MCF 10A (cell line): ENCODE measurements at regions of chr11 and their contacts with region 1.

Region 1: DNA sequence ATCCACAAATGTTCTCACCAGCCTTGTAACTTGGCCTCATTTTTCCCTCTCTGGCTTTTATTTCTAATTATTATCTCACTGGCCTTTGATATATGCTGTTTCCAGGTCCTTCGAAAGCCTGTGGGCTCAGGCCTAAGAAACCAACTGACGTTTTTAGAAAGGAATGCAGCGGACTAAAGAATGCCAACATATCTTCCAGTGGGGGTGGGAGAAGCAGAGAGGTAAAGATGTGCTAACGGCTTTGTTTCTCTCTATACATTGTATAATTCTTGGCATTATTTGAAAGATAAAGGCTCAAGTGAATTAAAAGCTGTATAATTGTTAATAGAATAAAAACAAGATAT is 28.2 kb downstream of the OR6Q1 start:
- DNase-seq: peak; percentile 64
- H3K4me3 Mint-ChIP-seq: no peak overlapping the region
- H3K27ac Mint-ChIP-seq: peak overlapping the region; percentile 46
- H3K4me1 Mint-ChIP-seq: peaks cover 16% of the 10 kb centered on the region
- H3K27me3 Mint-ChIP-seq: no peaks in the 10 kb centered on the region
- CTCF ChIP-seq: no peak

Region 2: GRCh38 chr11:57823859-57824258 is 235.1 kb before region 1 on chr11:
- CTCF ChIA-PET with region 1: interaction called, 3 read pairs
- POLR2A ChIA-PET with region 1: interaction called, 3 read pairs
- intact Hi-C with region 1: loop called (anchors 10 kb)
- DNase-seq: no peak
- H3K4me3 Mint-ChIP-seq: no peak overlapping the region
- H3K27ac Mint-ChIP-seq: no peak overlapping the region
- H3K4me1 Mint-ChIP-seq: no peaks in the 10 kb centered on the region
- H3K27me3 Mint-ChIP-seq: no peaks in the 10 kb centered on the region
- CTCF ChIP-seq: no peak

Region 3: DNA sequence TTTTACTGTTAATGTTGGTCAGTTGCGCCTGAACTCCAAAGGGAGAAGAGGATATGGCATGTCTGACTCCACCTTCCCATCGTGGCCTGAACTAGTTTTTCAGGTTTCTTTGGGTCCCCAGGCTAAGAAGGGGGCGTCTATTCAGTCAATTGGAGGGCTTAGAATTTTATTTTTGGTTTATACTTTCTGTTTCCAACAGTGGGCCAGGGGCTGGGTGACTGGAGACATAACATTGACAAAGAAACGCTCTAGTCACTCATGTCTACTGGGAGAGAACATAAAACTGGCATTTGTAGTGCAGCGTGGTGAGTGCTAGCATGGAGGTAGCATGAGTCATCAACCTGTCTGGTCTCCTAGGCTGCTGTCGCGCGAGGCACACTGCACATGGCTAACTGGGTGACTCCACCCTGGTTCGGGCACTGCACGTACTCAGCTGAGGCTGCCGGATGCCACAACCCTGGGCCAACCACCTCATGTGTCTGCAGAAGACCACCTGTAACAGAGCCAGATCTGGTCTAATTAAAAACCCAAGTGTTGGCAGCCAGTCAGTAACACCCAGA is 155.3 kb before region 1 on chr11:
- CTCF ChIA-PET with region 1: no interaction called
- POLR2A ChIA-PET with region 1: no interaction called
- intact Hi-C with region 1: loop called (anchors 2 kb)
- DNase-seq: peak; percentile 84
- H3K4me3 Mint-ChIP-seq: peak overlapping the region; percentile 77
- H3K27ac Mint-ChIP-seq: peak overlapping the region; percentile 88
- H3K4me1 Mint-ChIP-seq: peaks cover 67% of the 10 kb centered on the region
- H3K27me3 Mint-ChIP-seq: no peaks in the 10 kb centered on the region
- CTCF ChIP-seq: no peak